Gastrocnemius medialis (tissue), 4 donors: ENCODE measurements at regions of chr5 and their contacts with region 1.

Region 1: DNA sequence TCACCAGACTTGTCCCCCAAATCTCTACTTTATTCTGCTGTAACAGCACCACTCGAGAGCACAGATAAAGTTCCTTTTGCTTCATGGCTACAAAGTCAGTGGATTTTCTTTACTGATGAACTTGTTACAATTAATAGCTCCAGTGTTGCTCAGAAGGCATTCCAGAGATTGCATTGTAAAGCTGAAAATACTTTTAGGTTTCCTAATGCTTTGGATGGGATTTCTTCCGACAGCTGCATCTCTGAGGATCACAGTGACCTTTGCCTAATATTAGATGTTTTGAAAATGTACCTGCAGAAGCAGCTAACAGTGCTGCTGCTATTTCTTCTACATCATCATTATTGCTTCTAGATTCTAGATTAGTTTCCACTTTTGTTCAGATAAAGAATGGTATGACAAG is 58.8 kb upstream of the TMEM171 start:
- DNase-seq: no peak
- ATAC-seq: peak in 1 of 2 donors; percentile 69
- H3K4me3 ChIP-seq: no peak overlapping the region
- H3K27ac ChIP-seq: no peak overlapping the region
- H3K4me1 ChIP-seq: peaks cover 5 to 7% of the 10 kb centered on the region in 2 donors
- H3K27me3 ChIP-seq: no peaks in the 10 kb centered on the region
- CTCF ChIP-seq: no peak
- POLR2A ChIP-seq: no peak

Region 2: GRCh38 chr5:72955768-72956323 is 105.7 kb before region 1 on chr5 and contains the start of gene FCHO2:
- in situ Hi-C with region 1: no loop called
- intact Hi-C with region 1: loop called (anchors 5 kb)
- DNase-seq: peak; percentile 96 to 97
- ATAC-seq: peak; percentile 89 to 90
- H3K4me3 ChIP-seq: peak within 1 kb of the TSS; percentile 71 to 85 (median 80)
- H3K27ac ChIP-seq: peak within 1 kb of the TSS; percentile 92 to 97 (median 96)
- H3K4me1 ChIP-seq: peaks cover 41 to 43% of the 10 kb centered on the region in 2 donors
- H3K27me3 ChIP-seq: no peaks in the 10 kb centered on the region
- CTCF ChIP-seq: peak; percentile 72 to 93 (median 87)
- POLR2A ChIP-seq: peak; percentile 62 to 79
- total RNA-seq, gene FCHO2: 8.3 to 14.8 (median 12.3) TPM

Region 3: GRCh38 chr5:73007051-73007450 is 54.5 kb before region 1 on chr5:
- in situ Hi-C with region 1: no loop called
- intact Hi-C with region 1: loop called (anchors 10 kb)
- DNase-seq: no peak
- ATAC-seq: no peak
- H3K4me3 ChIP-seq: no peak overlapping the region
- H3K27ac ChIP-seq: no peak overlapping the region
- H3K4me1 ChIP-seq: peaks cover 5 to 9% of the 10 kb centered on the region in 2 donors
- H3K27me3 ChIP-seq: no peaks in the 10 kb centered on the region
- CTCF ChIP-seq: no peak
- POLR2A ChIP-seq: no peak